ENCODE measurements at regions of chr2 and their contacts with region 1.

Region 1: DNA sequence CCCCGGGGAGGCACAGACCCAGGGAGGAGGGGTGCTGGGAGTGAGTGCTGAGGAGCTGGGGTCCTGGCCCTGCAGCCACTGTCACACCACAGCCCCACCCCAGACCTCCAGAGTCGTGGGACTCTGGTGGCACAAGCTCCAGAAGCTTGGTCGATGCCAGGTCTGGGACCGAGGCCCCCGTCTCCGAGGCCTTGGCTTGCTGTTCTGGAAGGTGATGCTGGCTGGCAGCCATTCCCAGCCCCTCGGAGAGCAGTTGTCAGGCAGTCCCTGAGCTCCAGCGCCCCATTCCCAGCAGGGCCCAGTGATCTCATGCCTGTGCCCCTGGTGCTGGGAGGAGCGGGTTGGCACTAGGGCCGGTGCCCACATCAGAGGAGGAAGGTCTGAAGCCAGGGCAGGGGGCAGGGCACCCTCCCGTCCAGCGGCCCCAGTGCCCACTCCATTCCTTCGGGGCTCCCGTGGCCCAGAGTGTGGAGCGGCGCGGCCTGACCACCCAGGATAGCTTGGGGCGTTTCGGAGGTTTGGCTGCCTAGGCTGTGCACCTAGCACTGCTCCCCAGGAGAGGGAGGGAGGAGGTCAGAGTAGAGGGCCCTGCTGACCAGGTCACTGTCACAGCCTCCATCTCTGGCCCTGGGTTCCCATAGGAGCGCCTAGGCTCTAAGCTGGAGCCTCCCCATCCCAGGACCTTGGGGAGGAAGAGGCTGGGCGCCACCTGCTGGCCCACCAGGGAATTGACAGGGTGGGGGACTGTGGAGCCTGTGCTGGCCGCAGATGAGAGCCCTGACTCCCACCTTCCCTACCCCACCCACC is 16.8 kb upstream of the ALPI start:
- DNase-seq: peak in 2 of 10 donors; percentile 23 to 65
- H3K4me3 ChIP-seq: no peak overlapping the region
- H3K27ac ChIP-seq: no peak overlapping the region
- H3K27me3 ChIP-seq: peaks cover 0 to 4% (median 0%) of the 10 kb centered on the region in 45 donors
- CTCF ChIP-seq: peak in 54 of 56 donors; percentile 18 to 77 (median 63)

Region 2: DNA sequence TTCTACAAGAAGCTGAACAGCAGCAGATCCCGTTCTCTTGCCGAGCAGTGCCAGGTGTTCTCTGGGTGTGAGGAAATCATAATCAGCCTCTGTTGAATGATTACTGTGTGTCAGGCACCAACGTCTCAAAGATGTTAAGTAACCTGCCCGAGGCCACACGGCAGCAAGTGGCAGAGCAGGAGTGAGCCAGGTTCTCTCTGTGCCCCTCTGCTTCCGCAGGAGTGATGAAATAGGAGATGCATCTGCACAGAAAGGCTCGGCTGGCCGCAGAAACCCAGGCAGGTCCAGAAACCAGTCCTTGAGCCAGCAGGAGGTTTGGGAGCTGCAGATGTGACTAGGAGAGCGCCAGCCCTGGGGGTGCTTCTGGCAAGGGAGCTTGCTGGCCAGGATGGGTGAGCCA is 584.5 kb before region 1 on chr2:
- intact Hi-C with region 1: loop called in 1 of 2 experiments (anchors 5 kb)
- DNase-seq: no peak
- H3K4me3 ChIP-seq: no peak overlapping the region
- H3K27ac ChIP-seq: no peak overlapping the region
- H3K27me3 ChIP-seq: peaks cover 0 to 3% (median 0%) of the 10 kb centered on the region in 45 donors
- CTCF ChIP-seq: no peak

Region 3: GRCh38 chr2:232333361-232334270 is 105.5 kb before region 1 on chr2:
- intact Hi-C with region 1: loop called (anchors 5 to 10 kb)
- DNase-seq: peak in 5 of 10 donors; percentile 26 to 43 (median 41)
- H3K4me3 ChIP-seq: no peak overlapping the region
- H3K27ac ChIP-seq: no peak overlapping the region
- H3K27me3 ChIP-seq: no peaks in the 10 kb centered on the region
- CTCF ChIP-seq: peak in 21 of 56 donors; percentile 8 to 41 (median 20)